Activated CD4-positive, alpha-beta T cell treated with anti-CD3 and anti-CD28 coated beads, Interleukin-2, amount 10 ng/mL, durations not matched to agents 7 days and 5 days (primary cell): ENCODE measurements at regions of chr19 and their contacts with region 1.

Region 1: DNA sequence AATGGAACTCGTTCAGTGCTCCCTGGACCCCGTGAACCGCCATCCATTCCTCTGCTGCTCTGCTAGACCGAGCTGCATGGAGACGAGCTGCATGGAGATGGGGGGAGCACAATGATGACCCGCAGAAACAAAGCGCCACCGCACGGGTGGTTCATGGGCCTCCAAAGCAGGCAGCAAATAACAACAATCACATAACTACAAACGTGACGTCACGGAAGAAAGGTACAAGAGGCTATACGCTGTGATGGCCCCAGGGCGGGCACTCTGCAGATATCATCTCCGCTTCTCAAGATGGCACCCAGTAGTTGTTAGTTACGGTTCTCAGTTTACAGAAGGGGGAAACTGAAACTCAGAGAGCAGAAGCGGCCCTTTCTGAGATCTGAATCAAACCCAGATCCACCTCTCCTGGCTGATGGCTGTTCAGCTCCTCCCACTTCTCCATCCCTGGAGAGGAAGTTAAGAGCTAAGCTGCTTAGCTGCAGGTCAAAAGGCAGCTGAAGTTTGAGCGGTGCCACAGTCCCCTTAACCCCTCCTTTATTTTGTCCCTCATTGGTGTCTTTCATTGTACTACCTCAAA is 1.7 kb downstream of the ATP13A1 start:
- DNase-seq: peak; percentile 56
- H3K4me3 Mint-ChIP-seq: peak overlapping the region; percentile 93
- H3K27ac Mint-ChIP-seq: peak overlapping the region; percentile 96
- H3K4me1 Mint-ChIP-seq: peaks cover 24% of the 10 kb centered on the region
- H3K27me3 Mint-ChIP-seq: no peaks in the 10 kb centered on the region

Region 2: GRCh38 chr19:19643158-19644053 is 18.4 kb before region 1 on chr19 and contains the start of gene GMIP:
- CTCF ChIA-PET with region 1: interaction called, 16 read pairs
- POLR2A ChIA-PET with region 1: interaction called, 7 read pairs
- DNase-seq: peak; percentile 88
- H3K4me3 Mint-ChIP-seq: peak within 1 kb of the TSS; percentile 87
- H3K27ac Mint-ChIP-seq: peak within 1 kb of the TSS; percentile 95
- H3K4me1 Mint-ChIP-seq: peaks cover 21% of the 10 kb centered on the region
- H3K27me3 Mint-ChIP-seq: no peaks in the 10 kb centered on the region
- total RNA-seq, gene GMIP: 101 to 111 TPM